ENCODE measurements at regions of chr12 and their contacts with region 1.

Region 1: GRCh38 chr12:56315622-56316473 is at the start of gene CNPY2:
- DNase-seq: peak; percentile 98
- ATAC-seq: peak; percentile 96
- H3K4me3 Mint-ChIP-seq: peak within 1 kb of the TSS; percentile 99
- H3K27ac Mint-ChIP-seq: peak within 1 kb of the TSS; percentile 98
- H3K4me1 Mint-ChIP-seq: peaks cover 16% of the 10 kb centered on the region
- H3K27me3 Mint-ChIP-seq: no peaks in the 10 kb centered on the region
- total RNA-seq, gene CNPY2: 112 to 113 TPM

Region 2: GRCh38 chr12:56299853-56300643 is 15.8 kb before region 1 on chr12 and contains the start of gene CS:
- CTCF ChIA-PET with region 1: interaction called, 14 read pairs
- POLR2A ChIA-PET with region 1: interaction called, 3 read pairs
- DNase-seq: peak; percentile 99
- ATAC-seq: peak; percentile 97
- H3K4me3 Mint-ChIP-seq: peak within 1 kb of the TSS; percentile 97
- H3K27ac Mint-ChIP-seq: peak within 1 kb of the TSS; percentile 91
- H3K4me1 Mint-ChIP-seq: peaks cover 52% of the 10 kb centered on the region
- H3K27me3 Mint-ChIP-seq: no peaks in the 10 kb centered on the region
- total RNA-seq, gene CS: 218 to 228 TPM

Region 3: DNA sequence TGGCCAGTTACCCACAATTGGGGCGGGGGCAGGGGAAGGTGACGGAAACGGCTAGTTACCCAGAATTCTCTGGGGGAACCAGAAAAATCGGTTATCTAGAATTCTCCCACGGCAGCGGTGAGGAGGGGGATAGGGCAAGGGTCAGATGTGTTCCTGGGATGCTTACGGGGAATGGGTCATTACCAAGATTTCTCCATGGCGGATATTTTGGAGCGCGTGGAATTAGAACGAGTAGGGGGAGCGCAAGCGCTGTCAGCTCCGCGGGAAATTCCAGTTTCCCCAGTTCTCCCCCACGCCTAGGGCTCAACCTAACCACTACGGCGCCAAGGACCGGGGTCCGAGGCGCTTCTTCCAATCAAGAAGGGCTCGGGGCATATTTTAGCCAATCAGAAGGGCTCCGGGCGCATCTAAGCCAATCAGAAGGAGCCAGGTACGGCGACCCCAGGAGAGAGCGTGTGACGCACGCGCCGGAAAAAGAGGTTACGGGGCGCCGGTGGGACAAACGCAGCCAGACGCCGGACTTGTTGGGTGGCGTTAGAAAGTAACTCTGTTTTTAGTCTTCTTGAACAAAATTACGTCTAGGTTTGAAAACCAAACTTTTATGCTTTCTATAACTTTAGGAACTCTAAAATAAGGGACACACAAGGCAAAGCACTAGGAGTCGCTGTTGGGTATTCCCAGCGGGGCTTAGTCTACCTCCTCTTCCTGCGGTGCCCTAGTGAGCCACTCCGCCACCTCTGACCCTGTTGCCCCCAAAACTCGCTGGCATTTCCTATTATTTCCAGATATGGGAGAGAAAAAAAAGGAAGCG is 18.0 kb after region 1 on chr12 and contains the start of gene PAN2:
- CTCF ChIA-PET with region 1: interaction called, 9 read pairs
- POLR2A ChIA-PET with region 1: interaction called, 17 read pairs
- DNase-seq: peak; percentile 97
- ATAC-seq: peak; percentile 94
- H3K4me3 Mint-ChIP-seq: peak within 1 kb of the TSS; percentile 96
- H3K27ac Mint-ChIP-seq: peak within 1 kb of the TSS; percentile 99
- H3K4me1 Mint-ChIP-seq: peaks cover 45% of the 10 kb centered on the region
- H3K27me3 Mint-ChIP-seq: no peaks in the 10 kb centered on the region
- total RNA-seq, gene PAN2: 61.8 to 63.7 TPM

Measured in activated CD8-positive, alpha-beta T cell treated with anti-CD3 and anti-CD28 coated beads, Interleukin-2, amount 10 ng/mL, durations not matched to agents 7 days and 5 days (primary cell).